Gastrocnemius medialis (tissue), 4 donors: ENCODE measurements at regions of chr1 and their contacts with region 1.

Region 1: DNA sequence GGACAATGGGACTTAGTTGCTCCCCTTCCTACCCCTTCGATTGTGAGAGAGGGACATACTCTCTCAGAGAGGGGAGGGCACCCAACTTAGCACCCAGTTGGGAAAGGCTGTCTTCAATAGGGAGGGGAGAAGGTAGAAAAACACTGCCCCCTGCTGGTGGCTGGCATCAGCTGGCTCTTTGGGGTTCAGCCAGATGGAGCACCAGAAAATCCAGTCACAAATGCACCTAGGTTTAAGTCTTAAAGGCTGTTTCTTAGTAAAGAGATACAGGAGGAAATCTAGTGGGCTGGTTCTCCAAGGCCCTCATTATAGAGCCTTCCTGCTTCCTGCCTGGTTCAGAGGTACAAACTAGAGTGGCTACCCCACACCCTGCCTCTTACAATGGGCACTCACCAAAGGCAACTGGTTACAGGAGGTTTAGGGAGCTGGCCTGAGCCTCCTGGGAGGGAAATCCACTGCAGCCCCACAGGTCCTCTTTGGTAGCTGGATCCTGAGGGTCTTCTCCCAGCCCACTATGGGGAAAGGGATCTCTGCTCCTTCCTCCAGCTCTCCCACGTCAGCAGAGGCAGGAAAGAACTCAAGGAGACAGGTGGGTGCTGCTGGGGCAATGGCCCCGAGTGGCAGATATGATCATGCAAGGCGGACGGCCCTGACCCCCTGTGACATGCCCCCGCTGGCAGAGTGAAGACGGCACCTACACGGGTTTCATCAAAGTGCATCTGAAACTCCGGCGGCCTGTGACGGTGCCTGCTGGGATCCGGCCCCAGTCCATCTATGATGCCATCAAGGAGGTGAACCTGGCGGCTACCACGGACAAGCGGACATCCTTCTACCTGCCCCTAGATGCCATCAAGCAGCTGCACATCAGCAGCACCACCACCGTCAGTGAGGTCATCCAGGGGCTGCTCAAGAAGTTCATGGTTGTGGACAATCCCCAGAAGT is 28.3 kb downstream of the EIF2D start:
- DNase-seq: peak; percentile 49 to 69
- ATAC-seq: peak; percentile 33 to 50
- H3K4me3 ChIP-seq: no peak overlapping the region
- H3K27ac ChIP-seq: no peak overlapping the region
- H3K4me1 ChIP-seq: peaks cover 14 to 18% of the 10 kb centered on the region in 2 donors
- H3K27me3 ChIP-seq: no peaks in the 10 kb centered on the region
- CTCF ChIP-seq: peak; percentile 79 to 92 (median 89)
- POLR2A ChIP-seq: no peak

Region 2: DNA sequence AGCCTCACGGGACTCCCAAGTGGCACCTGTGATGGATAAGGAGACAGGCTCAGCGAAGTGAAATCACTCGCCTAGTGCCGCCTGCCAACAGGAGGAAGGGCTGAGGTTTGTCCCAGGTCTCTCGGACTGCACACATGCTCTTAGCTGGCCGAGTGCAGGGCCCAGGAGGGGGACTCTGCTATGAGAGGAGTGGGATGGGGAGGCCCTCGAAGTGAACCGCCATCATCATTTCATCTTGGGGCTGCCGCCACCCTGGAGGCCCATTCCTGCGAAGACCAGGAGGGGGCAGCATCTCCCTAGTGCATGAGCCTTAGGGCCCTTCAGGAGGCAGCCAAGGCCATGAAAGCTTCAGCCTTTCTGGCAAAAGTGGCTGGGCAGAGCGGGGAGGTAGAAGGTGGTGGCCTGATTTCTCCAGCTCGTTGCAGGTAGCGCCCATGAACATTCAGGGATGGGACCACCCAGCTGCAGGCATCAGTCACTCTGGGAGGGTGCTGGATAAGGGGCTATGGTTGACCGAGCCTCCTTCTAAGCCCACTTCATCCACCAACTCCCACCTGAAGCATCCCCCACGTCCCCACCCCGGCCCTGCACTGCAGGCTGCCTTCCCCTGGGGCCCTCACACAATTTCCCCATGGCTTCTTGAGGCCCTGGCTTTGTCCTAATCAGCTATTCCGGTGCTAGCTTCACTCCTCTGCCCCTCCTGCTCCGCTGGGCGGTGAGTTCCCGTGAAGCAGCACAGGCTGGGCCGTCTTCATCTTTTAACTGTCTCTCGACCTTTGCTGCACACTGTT is 93.8 kb before region 1 on chr1:
- in situ Hi-C with region 1: loop called (anchors 5 to 10 kb)
- intact Hi-C with region 1: loop called (anchors 1 kb)
- DNase-seq: peak; percentile 41 to 68
- ATAC-seq: peak; percentile 94 to 95
- H3K4me3 ChIP-seq: no peak overlapping the region
- H3K27ac ChIP-seq: no peak overlapping the region
- H3K4me1 ChIP-seq: no peaks in the 10 kb centered on the region
- H3K27me3 ChIP-seq: no peaks in the 10 kb centered on the region
- CTCF ChIP-seq: peak; percentile 84 to 91 (median 91)
- POLR2A ChIP-seq: no peak

Region 3: GRCh38 chr1:206544562-206545257 is 39.3 kb before region 1 on chr1:
- in situ Hi-C with region 1: loop called in 3 of 4 experiments (anchors 5 kb)
- intact Hi-C with region 1: loop called (anchors 1 kb)
- DNase-seq: peak; percentile 36 to 60
- ATAC-seq: peak; percentile 82 to 89
- H3K4me3 ChIP-seq: no peak overlapping the region
- H3K27ac ChIP-seq: no peak overlapping the region
- H3K4me1 ChIP-seq: no peaks in the 10 kb centered on the region
- H3K27me3 ChIP-seq: no peaks in the 10 kb centered on the region
- CTCF ChIP-seq: peak; percentile 68 to 88 (median 75)
- POLR2A ChIP-seq: no peak

Region 4: DNA sequence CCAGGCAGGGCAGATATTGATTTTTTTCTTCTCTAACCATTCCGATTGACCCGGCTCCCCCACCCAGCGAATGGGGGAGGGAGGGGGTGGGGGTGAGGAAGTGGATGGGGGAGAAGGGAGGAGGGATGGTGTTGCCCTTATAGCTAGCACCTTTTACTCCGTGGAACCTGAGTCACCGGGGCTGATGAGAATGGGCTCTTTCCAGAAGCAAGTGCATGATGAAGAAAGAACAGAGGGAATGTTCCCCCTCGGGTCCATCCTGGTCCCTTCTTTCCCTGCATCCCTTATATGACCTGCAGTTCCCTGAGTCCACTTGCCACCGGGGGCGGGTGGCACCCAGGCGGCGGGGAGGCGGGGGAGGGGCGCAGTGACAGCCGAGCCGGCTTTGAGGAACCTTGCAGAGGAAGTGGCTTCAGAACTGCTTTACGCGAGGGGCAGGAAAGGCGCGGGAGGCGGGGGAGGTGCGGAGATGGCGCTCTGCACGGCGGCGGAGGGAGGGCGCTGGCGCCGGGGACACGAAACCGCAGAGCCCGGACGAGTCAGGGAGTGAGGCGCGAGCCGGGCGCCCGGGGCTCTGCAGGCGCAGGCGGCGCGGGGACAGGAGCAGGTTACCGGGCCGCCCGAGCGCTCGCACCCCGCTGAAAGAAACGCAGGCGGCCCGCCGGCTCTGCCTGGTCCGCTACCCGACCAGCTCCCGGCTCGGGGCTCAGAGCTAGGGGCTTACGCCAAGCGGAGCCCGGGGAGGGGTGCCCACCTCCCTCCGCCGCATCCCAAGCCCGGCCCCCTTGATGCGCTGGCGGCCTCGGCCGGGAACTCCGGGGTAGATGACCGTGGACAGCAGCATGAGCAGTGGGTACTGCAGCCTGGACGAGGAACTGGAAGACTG is 27.0 kb before region 1 on chr1:
- in situ Hi-C with region 1: no loop called
- intact Hi-C with region 1: loop called (anchors 2 kb)
- DNase-seq: peak; percentile 62 to 71
- ATAC-seq: peak; percentile 14 to 32
- H3K4me3 ChIP-seq: peak overlapping the region; percentile 56 to 91 (median 68)
- H3K27ac ChIP-seq: peak overlapping the region; percentile 35 to 81 (median 61)
- H3K4me1 ChIP-seq: peaks cover 31 to 55% of the 10 kb centered on the region in 2 donors
- H3K27me3 ChIP-seq: no peaks in the 10 kb centered on the region
- CTCF ChIP-seq: peak in 1 of 5 experiments; percentile 14
- POLR2A ChIP-seq: peak; percentile 16 to 30

Region 5: GRCh38 chr1:206706298-206706791 is 122.4 kb after region 1 on chr1:
- in situ Hi-C with region 1: no loop called
- intact Hi-C with region 1: no loop called
- DNase-seq: no peak
- ATAC-seq: no peak
- H3K4me3 ChIP-seq: peak overlapping the region in 2 of 4 donors; percentile 7
- H3K27ac ChIP-seq: peak overlapping the region; percentile 93 to 98 (median 96)
- H3K4me1 ChIP-seq: peaks cover 97 to 100% of the 10 kb centered on the region in 2 donors
- H3K27me3 ChIP-seq: no peaks in the 10 kb centered on the region
- CTCF ChIP-seq: no peak
- POLR2A ChIP-seq: no peak

Region 6: DNA sequence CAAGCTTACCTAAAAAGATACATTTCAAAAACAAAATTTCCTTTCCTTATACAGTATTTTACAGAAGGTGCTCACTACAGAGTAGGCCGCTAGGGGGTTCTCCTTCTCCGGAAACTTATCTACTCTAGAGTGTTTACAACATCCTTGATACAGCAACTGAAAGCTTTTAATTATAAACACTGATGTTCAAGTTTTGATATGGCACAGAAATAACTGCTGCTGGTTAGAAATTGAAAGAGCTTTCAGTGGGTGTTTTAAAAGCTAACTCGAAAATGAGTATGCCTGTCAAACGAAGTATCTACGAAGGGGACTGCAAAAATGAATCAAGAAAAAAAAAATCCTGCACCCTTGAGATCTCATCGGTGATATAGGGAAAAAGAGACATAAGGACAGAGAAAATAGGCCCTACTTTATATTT is 466.0 kb after region 1 on chr1:
- in situ Hi-C with region 1: no loop called
- intact Hi-C with region 1: no loop called
- DNase-seq: peak in 1 of 2 donors; percentile 28
- ATAC-seq: peak; percentile 21 to 45
- H3K4me3 ChIP-seq: peak overlapping the region; percentile 77 to 95 (median 90)
- H3K27ac ChIP-seq: peak overlapping the region; percentile 93 to 95 (median 94)
- H3K4me1 ChIP-seq: peaks cover 41 to 51% of the 10 kb centered on the region in 2 donors
- H3K27me3 ChIP-seq: no peaks in the 10 kb centered on the region
- CTCF ChIP-seq: peak; percentile 71 to 86 (median 81)
- POLR2A ChIP-seq: no peak